Dorsolateral prefrontal cortex (tissue), 120 donors: ENCODE measurements at regions of chr19 and their contacts with region 1.

Region 1: GRCh38 chr19:18846862-18847548 is 15.2 kb downstream of the UPF1 start:
- DNase-seq: peak; percentile 71 to 91 (median 80)
- H3K4me3 ChIP-seq: peak overlapping the region in 8 of 59 donors; percentile 0 to 19 (median 7)
- H3K27ac ChIP-seq: peak overlapping the region in 53 of 59 donors; percentile 28 to 93 (median 79)
- H3K27me3 ChIP-seq: no peaks in the 10 kb centered on the region
- CTCF ChIP-seq: peak; percentile 54 to 93 (median 83)

Region 2: DNA sequence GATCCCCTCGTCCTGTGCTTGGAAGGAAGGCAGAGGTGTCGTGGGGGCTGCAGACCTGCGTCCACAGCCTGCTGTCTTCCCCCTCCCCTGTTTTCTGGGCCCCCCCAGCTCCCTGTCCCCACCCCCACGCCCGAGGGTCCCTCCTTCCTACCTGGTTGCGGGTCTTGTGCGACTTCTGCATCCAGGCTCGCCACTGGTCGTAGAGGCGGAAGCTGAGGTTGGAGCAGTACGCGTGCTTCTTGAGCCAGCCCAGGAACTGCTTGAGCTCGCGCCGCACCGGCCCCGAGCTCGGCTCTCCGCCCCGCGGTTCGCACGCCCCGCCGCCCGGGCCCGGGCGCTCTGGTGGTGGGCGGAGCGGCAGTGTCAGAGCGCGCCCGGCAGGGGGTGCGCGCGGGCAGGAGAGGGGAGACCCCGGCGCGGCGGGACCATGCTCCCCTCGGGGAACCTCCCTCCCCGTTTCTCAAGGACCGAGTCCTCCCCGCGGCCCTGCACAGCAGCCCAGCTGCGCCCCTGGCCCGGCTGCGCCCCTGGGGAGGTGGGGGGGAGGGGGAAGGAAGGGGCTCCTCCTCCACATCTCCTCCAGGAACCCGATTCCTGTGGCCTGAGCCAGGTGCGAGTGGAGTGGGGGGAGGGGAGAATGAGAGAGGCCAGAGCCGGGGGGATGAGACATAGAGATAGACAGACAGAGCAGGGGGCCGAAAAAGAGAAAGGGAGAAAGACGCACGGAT is 252.7 kb before region 1 on chr19:
- intact Hi-C with region 1: loop called (anchors 2 to 5 kb)
- DNase-seq: peak in 6 of 10 donors; percentile 15 to 77 (median 56)
- H3K4me3 ChIP-seq: peak overlapping the region in 58 of 59 donors; percentile 17 to 65 (median 48)
- H3K27ac ChIP-seq: peak overlapping the region in 35 of 59 donors; percentile 2 to 75 (median 51)
- H3K27me3 ChIP-seq: peaks cover 0 to 26% (median 9%) of the 10 kb centered on the region in 45 donors
- CTCF ChIP-seq: peak; percentile 46 to 91 (median 78)

Region 3: GRCh38 chr19:18809150-18809868 is 37.7 kb before region 1 on chr19:
- intact Hi-C with region 1: no loop called
- DNase-seq: peak in 1 of 10 donors; percentile 37
- H3K4me3 ChIP-seq: no peak overlapping the region
- H3K27ac ChIP-seq: no peak overlapping the region
- H3K27me3 ChIP-seq: peaks cover 0 to 3% (median 0%) of the 10 kb centered on the region in 45 donors
- CTCF ChIP-seq: no peak